T-cell (primary cell): ENCODE measurements at regions of chr18 and their contacts with region 1.

Region 1: DNA sequence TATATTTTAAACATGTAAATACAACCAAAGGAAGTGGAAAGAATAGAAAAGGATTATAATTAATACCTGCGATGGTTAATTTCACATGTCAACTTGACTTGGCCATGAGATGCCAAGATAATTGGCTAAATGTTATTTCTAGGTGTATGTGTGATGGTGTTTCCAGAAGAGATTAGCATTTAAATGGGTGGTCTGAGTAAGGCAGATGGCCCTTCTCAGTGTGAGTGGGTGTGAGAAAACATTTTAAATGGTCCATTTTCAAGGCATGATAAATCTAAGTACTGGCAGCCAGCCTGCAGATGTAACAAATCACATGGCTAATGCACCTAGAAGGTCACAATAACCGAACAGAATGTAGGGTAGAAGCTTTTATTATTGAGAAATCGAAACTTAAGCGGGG is 99.6 kb upstream of the CDH7 start:
- DNase-seq: no peak
- ATAC-seq: no peak
- H3K4me3 ChIP-seq: no peak overlapping the region
- H3K4me3 Mint-ChIP-seq: no peak overlapping the region
- H3K27ac ChIP-seq: no peak overlapping the region
- H3K27ac Mint-ChIP-seq: no peak overlapping the region
- H3K4me1 ChIP-seq: no peaks in the 10 kb centered on the region
- H3K4me1 Mint-ChIP-seq: no peaks in the 10 kb centered on the region
- H3K27me3 ChIP-seq: no peaks in the 10 kb centered on the region
- H3K27me3 Mint-ChIP-seq: no peaks in the 10 kb centered on the region

Region 2: DNA sequence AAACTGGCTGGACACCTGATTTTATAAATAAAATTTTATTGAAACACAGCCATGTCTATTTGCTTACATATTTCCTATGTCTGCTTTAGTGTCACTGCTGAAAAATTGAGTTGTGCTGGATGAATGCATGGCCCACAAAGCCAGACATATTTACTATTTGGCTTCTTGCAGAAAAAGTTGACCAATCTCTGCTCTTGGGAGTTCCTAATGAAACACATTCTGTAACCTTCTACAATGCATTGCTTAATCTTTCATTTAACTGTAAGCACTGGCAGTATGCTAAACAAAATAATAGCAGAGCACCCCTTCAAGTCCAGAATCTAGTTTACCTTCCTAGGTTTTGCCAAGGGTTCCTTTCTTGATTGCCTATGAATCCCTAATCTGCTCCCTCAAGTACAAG is 1893.7 kb before region 1 on chr18:
- CTCF ChIA-PET with region 1: no interaction called
- POLR2A ChIA-PET with region 1: interaction called in 1 of 2 experiments, 15 read pairs
- DNase-seq: no peak
- ATAC-seq: no peak
- H3K4me3 ChIP-seq: no peak overlapping the region
- H3K4me3 Mint-ChIP-seq: no peak overlapping the region
- H3K27ac ChIP-seq: no peak overlapping the region
- H3K27ac Mint-ChIP-seq: no peak overlapping the region
- H3K4me1 ChIP-seq: no peaks in the 10 kb centered on the region
- H3K4me1 Mint-ChIP-seq: no peaks in the 10 kb centered on the region
- H3K27me3 ChIP-seq: no peaks in the 10 kb centered on the region
- H3K27me3 Mint-ChIP-seq: peaks cover 1 to 4% of the 10 kb centered on the region in 2 donors

Region 3: GRCh38 chr18:65711493-65711892 is 60.3 kb after region 1 on chr18:
- CTCF ChIA-PET with region 1: no interaction called
- POLR2A ChIA-PET with region 1: no interaction called
- DNase-seq: no peak
- ATAC-seq: no peak
- H3K4me3 ChIP-seq: no peak overlapping the region
- H3K4me3 Mint-ChIP-seq: no peak overlapping the region
- H3K27ac ChIP-seq: no peak overlapping the region
- H3K27ac Mint-ChIP-seq: no peak overlapping the region
- H3K4me1 ChIP-seq: no peaks in the 10 kb centered on the region
- H3K4me1 Mint-ChIP-seq: no peaks in the 10 kb centered on the region
- H3K27me3 ChIP-seq: no peaks in the 10 kb centered on the region
- H3K27me3 Mint-ChIP-seq: no peaks in the 10 kb centered on the region